Endothelial cell of umbilical vein (primary cell): ENCODE measurements at regions of chr4 and their contacts with region 1.

Region 1: DNA sequence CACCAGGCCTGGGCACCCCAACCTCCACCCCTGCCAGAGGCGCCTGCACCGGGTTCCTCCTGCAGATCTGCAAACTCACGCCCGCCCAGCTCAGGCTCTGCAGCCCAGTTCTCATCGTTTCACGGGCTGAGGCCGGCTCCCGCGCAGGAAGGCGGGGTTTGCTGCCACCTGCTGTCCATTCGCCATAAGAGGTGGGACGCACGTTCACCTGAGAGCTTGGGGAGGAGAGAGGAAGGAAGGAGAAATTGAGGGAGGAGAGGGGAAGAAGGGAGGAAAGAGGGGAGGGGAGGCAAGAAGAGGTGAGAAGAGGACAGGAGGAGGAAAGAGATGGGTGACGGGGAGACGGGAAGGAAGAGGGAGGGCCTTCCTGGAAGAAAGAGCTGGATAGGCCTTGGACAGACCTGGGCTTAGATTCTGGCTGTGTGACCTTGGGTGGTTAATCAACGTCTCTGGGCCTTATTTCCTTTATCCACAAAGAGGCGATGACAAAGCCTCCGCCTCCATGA is 114.5 kb downstream of the ADRA2C start:
- DNase-seq: peak; percentile 55
- H3K4me3 ChIP-seq: no peak overlapping the region
- H3K27ac ChIP-seq: no peak overlapping the region
- H3K4me1 ChIP-seq: no peaks in the 10 kb centered on the region
- H3K27me3 ChIP-seq: peaks cover 12 to 19% of the 10 kb centered on the region in 2 experiments
- CTCF ChIP-seq: peak; percentile 55 to 75
- POLR2A ChIP-seq: no peak

Region 2: DNA sequence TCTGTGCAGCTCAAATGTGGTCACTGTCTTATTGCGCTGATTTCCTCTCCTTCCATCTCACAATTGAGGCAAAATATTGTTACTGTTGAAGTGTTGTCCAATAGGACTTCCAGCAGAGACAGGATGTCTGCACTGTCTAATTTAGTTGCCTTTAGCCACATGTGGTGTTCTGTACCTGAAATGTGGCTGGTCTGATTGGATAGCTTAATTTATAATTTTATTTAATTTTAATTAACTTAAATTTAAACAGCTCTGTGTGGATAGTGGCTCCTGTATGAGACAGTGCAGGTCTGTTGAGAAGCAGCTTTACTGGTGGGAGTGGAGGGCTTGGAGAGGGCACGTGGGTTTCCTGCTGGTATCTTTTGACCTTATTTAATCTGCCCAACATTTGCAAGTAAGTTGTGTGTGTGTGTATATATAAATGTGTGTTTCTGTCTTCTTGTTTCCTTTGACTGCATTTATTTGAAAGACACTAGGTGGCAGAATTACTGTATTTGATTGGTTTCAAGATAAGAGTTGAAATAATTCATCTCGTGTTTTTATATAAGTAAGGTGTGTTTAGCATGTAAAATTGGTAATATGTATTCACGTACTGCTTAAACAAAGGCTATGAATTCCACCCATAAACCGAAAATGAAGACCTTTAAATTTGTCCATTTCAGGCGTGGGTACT is 687.0 kb before region 1 on chr4:
- CTCF ChIA-PET with region 1: interaction called, 10 read pairs
- POLR2A ChIA-PET with region 1: no interaction called
- dilution Hi-C with region 1: no loop called
- intact Hi-C with region 1: no loop called
- DNase-seq: peak; percentile 44
- H3K4me3 ChIP-seq: no peak overlapping the region
- H3K27ac ChIP-seq: no peak overlapping the region
- H3K4me1 ChIP-seq: no peaks in the 10 kb centered on the region
- H3K27me3 ChIP-seq: no peaks in the 10 kb centered on the region
- CTCF ChIP-seq: peak; percentile 18 to 20
- POLR2A ChIP-seq: no peak

Region 3: DNA sequence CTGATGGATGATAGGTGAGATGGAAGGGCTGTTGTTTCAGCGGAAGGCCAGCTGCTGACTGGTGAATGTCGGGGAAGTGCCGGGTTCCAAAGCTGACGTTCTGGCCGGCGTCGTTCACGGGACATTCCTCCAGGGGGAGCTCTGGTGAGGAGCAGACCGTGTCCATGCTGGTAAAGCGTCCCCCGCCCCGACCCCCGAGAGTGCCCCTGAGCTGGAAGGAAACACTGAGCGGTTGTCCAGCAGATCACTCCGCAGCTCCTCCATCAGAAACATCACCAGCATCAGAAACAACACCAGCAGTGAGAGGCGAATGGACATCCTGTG is 133.1 kb before region 1 on chr4:
- CTCF ChIA-PET with region 1: interaction called, 52 read pairs
- POLR2A ChIA-PET with region 1: no interaction called
- dilution Hi-C with region 1: no loop called
- intact Hi-C with region 1: loop called (anchors 1 kb)
- DNase-seq: no peak
- H3K4me3 ChIP-seq: no peak overlapping the region
- H3K27ac ChIP-seq: no peak overlapping the region
- H3K4me1 ChIP-seq: no peaks in the 10 kb centered on the region
- H3K27me3 ChIP-seq: peaks cover 5 to 12% of the 10 kb centered on the region in 2 experiments
- CTCF ChIP-seq: peak; percentile 23 to 55
- POLR2A ChIP-seq: no peak

Region 4: GRCh38 chr4:3791978-3792542 is 88.6 kb before region 1 on chr4:
- CTCF ChIA-PET with region 1: interaction called, 8 read pairs
- POLR2A ChIA-PET with region 1: no interaction called
- dilution Hi-C with region 1: no loop called
- intact Hi-C with region 1: loop called (anchors 2 kb)
- DNase-seq: peak; percentile 16
- H3K4me3 ChIP-seq: no peak overlapping the region
- H3K27ac ChIP-seq: no peak overlapping the region
- H3K4me1 ChIP-seq: no peaks in the 10 kb centered on the region
- H3K27me3 ChIP-seq: no peaks in the 10 kb centered on the region
- CTCF ChIP-seq: no peak
- POLR2A ChIP-seq: no peak

Region 5: DNA sequence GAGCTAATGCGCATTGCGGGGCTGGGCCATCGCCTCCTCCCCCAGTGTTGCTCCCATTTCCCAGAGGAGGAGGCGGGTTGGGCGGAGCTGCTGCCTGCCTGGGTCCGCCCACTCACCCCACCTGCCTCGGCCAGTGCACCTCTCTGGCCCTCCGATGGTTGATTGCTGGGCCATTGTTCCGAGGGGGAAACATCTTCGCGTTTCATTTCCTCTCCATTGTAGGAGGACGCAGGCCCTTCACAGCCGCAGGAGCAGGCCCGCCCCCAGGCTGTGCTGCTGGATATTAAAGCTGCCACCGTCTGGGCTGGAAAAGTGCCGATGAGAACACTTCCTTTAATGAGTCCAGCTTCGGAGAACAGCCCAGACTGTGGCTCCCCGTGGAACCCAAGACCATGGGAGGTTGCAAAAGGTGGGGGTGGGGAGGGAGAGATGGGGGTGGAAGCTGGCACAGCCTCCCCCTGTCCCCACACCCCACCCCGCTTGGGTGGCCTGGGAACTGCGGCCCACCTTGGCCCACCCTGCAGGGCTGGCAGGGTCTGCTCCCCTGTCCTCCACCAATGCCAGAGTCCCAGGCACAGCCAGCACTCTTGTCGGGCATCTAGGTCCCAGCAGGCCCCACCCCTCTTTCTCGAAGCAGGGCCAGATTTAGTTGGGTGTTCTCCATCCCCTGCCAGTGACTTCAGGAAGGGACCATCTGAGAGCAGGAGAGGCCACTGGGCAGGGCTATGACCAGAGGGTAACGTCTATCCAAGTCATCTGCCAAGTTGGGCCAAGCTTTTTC is 17.8 kb before region 1 on chr4:
- CTCF ChIA-PET with region 1: interaction called, 12 read pairs
- POLR2A ChIA-PET with region 1: no interaction called
- dilution Hi-C with region 1: no loop called
- intact Hi-C with region 1: loop called (anchors 1 kb)
- DNase-seq: peak; percentile 81
- H3K4me3 ChIP-seq: no peak overlapping the region
- H3K27ac ChIP-seq: no peak overlapping the region
- H3K4me1 ChIP-seq: peaks cover 4% of the 10 kb centered on the region
- H3K27me3 ChIP-seq: no peaks in the 10 kb centered on the region
- CTCF ChIP-seq: no peak
- POLR2A ChIP-seq: no peak

Region 6: DNA sequence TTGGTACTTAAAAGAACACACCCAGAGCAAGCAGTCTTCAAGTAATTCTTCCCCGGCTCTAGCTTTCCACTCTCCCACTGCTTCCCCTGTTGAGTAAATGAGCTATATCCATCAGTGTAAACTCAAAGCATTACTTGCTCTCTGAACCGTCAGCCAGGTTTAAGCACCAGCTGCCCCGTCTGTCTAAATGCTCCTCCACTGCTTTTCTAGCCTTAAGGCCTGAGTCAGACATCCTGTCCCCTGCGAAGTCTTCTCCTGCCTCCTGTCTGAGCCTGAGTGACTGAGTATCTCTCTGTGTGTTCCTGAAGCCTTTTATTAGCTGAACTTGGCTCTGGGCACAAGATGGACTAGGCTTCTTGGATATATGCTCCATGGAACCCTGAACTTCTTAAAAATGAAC is 1375.8 kb after region 1 on chr4:
- CTCF ChIA-PET with region 1: no interaction called
- POLR2A ChIA-PET with region 1: no interaction called
- dilution Hi-C with region 1: no loop called
- intact Hi-C with region 1: no loop called
- DNase-seq: no peak
- H3K4me3 ChIP-seq: no peak overlapping the region
- H3K27ac ChIP-seq: no peak overlapping the region
- H3K4me1 ChIP-seq: no peaks in the 10 kb centered on the region
- H3K27me3 ChIP-seq: no peaks in the 10 kb centered on the region
- CTCF ChIP-seq: no peak
- POLR2A ChIP-seq: no peak